ENCODE measurements at regions of chr12 and their contacts with region 1.

Region 1: DNA sequence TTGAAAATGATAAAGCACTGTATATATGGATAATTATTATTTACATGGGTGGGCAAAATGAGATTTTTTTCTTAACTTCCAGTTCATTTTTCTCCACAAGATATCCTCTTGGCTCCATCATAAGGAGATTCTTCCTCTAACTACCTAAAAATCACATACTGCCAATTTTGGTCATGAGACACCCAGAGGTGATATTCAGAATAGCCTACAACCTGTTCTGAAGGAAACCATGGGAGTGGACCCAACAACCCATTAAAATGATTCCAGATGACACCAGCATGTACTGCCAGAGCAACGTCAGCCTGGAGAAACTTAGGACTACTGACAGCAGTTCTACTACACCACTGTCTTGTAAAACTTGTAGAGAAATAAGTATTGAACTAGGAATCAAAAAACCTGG is 136.3 kb upstream of the TMPO start:
- DNase-seq: no peak
- ATAC-seq: no peak
- H3K4me3 ChIP-seq: no peak overlapping the region
- H3K27ac ChIP-seq: no peak overlapping the region
- H3K4me1 ChIP-seq: no peaks in the 10 kb centered on the region
- H3K27me3 ChIP-seq: no peaks in the 10 kb centered on the region; a peak in 1 of 4 replicates
- CTCF ChIP-seq: 0 out of 6 replicates have a peak, but pooled peaks of 1 of the 3 experiments have one; percentile 7
- EP300 ChIP-seq: no peak
- POLR2A ChIP-seq: no peak
- RAD21 ChIP-seq: no peak

Region 2: DNA sequence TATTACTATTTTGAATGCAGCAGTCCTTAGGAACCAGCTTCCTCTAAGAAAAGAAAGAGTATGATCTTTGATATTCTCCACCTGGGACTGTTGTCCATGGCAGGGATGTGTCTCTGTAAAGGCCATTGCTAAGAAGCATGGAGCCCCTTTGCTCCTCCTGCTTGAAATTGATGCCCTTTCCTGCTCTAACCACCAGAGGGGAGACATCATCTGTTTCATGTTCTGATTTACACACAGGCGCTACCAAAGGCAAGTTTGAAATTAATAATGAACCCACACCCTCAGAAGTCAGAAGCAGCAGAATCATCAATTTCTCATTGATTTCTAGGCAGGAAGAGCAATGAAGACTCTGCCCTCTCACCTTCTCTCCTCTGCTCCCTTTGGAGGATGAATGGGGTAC is 662.8 kb before region 1 on chr12:
- CTCF ChIA-PET with region 1: interaction called, 3 read pairs
- POLR2A ChIA-PET with region 1: no interaction called
- RAD21 ChIA-PET with region 1: no interaction called
- SMC1A ChIA-PET with region 1: interaction called, 3 read pairs
- in situ Hi-C with region 1: no loop called
- intact Hi-C with region 1: loop called (anchors 5 kb)
- DNase-seq: no peak
- ATAC-seq: peak; percentile 55
- H3K4me3 ChIP-seq: no peak overlapping the region
- H3K27ac ChIP-seq: no peak overlapping the region
- H3K4me1 ChIP-seq: no peaks in the 10 kb centered on the region
- H3K27me3 ChIP-seq: no peaks in the 10 kb centered on the region; a peak in 1 of 4 replicates
- CTCF ChIP-seq: peak in 2 of 3 experiments; percentile 20 to 37; a peak in 1 of 6 replicates
- EP300 ChIP-seq: no peak
- POLR2A ChIP-seq: no peak
- RAD21 ChIP-seq: peak; percentile 38; the same call in 1 of the 2 replicates

Region 3: GRCh38 chr12:98446682-98447081 is 67.6 kb after region 1 on chr12:
- CTCF ChIA-PET with region 1: no interaction called
- POLR2A ChIA-PET with region 1: no interaction called
- RAD21 ChIA-PET with region 1: no interaction called
- SMC1A ChIA-PET with region 1: no interaction called
- in situ Hi-C with region 1: no loop called
- intact Hi-C with region 1: no loop called
- DNase-seq: no peak
- ATAC-seq: no peak
- H3K4me3 ChIP-seq: no peak overlapping the region
- H3K27ac ChIP-seq: no peak overlapping the region
- H3K4me1 ChIP-seq: no peaks in the 10 kb centered on the region
- H3K27me3 ChIP-seq: no peaks in the 10 kb centered on the region; a peak in 1 of 4 replicates
- CTCF ChIP-seq: no peak
- EP300 ChIP-seq: no peak
- POLR2A ChIP-seq: no peak
- RAD21 ChIP-seq: no peak